ENCODE measurements at regions of chrX and their contacts with region 1.

Region 1: DNA sequence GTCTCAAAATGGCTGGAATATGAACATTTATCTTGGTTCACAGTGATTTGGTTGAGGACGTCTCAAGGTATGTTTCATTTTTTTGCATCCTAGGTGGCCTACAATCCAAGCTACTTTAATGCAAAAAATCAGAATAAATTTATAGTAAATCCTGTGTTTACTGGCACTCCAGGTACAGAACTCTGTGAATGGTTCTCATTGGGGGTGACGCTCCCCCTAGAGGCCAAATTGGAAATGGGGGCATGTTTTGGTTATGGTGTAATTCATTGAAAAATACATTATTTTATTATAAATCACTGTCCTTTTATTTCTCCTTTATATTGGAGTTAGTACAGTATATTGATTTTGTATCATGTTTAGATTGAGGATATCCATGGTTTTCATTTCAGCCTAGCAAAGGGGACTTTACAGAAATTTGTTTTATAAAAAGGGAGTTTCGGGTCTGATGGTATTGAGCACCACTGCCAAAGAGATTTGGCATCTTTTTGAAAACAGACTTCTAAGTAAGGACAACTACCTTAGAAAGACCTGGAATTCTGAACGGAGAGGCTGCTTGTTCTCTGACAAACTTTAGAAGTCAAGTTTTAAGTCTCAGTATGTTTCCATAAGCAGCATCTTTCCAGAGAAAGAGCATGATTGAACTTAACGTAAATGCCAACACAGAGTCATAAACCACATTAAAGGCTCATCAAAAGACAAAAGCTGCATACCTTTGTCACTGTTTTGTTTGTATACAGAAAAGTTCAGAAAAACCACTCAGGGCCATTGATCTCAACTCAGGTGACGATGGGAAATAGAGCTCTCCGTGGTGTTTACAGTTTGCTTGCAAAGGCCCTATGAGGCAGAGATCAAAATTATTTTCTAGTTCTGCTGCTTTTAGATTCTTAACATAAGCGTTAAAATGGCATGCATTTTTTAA is 19.4 kb downstream of the MTM1 start:
- DNase-seq: peak; percentile 68
- ATAC-seq: peak; percentile 45
- H3K4me3 Mint-ChIP-seq: no peak overlapping the region
- H3K27ac Mint-ChIP-seq: no peak overlapping the region
- H3K4me1 Mint-ChIP-seq: peaks cover 19% of the 10 kb centered on the region
- H3K27me3 Mint-ChIP-seq: no peaks in the 10 kb centered on the region
- CTCF ChIP-seq: peak; percentile 53

Region 2: DNA sequence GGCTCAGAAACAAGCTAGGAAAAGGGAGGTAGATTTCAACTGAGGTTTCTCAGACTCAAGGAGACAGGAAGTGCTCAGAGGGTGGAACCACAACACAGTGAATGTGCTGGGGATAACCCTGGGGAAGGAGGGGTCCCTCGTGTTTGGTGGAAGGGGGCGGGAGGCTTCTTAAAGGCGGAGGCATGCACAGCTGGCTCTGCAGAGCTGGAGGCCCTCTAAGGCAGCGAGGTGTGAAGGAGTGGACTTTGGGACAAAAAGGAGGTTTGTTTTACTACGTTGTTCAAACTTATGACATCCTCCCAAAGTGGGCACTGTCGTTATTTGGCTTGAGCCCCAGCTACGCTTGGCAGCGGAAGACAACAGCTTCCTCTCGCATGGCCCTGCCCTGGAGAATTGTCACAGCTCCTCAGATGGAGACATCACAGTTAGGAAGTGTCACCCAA is 41.1 kb before region 1 on chrX:
- CTCF ChIA-PET with region 1: interaction called, 10 read pairs
- POLR2A ChIA-PET with region 1: interaction called, 3 read pairs
- intact Hi-C with region 1: no loop called
- DNase-seq: peak; percentile 54
- ATAC-seq: peak; percentile 62
- H3K4me3 Mint-ChIP-seq: peak overlapping the region; percentile 29
- H3K27ac Mint-ChIP-seq: peak overlapping the region; percentile 80
- H3K4me1 Mint-ChIP-seq: peaks cover 24% of the 10 kb centered on the region
- H3K27me3 Mint-ChIP-seq: no peaks in the 10 kb centered on the region
- CTCF ChIP-seq: no peak

Region 3: GRCh38 chrX:150599226-150599625 is 11.4 kb after region 1 on chrX:
- CTCF ChIA-PET with region 1: interaction called, 17 read pairs
- POLR2A ChIA-PET with region 1: no interaction called
- intact Hi-C with region 1: no loop called
- DNase-seq: no peak
- ATAC-seq: no peak
- H3K4me3 Mint-ChIP-seq: no peak overlapping the region
- H3K27ac Mint-ChIP-seq: no peak overlapping the region
- H3K4me1 Mint-ChIP-seq: no peaks in the 10 kb centered on the region
- H3K27me3 Mint-ChIP-seq: no peaks in the 10 kb centered on the region
- CTCF ChIP-seq: no peak

Measured in activated CD8-positive, alpha-beta T cell treated with anti-CD3 and anti-CD28 coated beads for 36 hours (primary cell).